ENCODE measurements at regions of chr13 and their contacts with region 1.

Region 1: DNA sequence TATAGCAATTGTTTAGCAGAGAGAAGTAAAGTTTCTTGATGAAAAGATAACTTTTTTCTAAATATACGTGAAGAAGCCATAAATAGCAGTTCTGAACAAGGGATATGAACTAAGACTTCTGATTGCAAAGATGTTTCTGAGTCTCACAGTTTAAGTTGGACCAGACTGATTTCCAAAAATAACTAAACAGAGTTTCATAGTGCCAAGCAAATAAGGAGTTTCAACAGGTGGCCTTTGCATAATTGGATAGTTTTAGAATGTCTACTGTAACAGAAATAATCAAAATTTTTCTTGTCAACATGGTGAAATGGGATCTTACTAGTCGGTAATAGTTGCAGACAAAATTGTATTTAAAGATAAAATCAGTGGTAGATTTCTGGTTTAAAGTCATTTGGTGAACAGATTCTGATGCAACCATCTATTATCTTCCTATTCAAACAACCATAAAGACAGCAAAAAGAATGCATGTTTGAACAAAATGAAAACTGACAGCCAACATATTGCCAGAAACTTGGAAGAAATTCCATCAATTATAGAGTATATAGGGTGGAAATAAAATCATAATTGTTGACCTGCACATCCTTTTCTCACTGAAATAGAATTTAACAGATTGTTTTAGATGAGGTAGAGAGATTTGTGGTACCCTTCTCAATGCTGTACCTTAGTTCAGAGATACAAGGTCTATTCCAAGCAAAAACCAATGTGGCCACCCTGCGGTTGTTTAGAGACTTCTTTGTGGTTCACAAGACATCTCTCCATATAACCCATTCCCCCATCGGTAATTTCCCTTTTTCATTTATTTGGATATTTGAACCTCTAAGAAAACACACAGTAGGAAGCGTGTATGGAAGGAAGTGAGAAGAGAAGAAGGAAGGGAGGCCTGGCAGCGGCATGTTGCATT is 275.3 kb downstream of the COG6 start:
- DNase-seq: no peak
- H3K4me3 Mint-ChIP-seq: no peak overlapping the region
- H3K27ac Mint-ChIP-seq: peak overlapping the region; percentile 48
- H3K4me1 Mint-ChIP-seq: peaks cover 24% of the 10 kb centered on the region
- H3K27me3 Mint-ChIP-seq: no peaks in the 10 kb centered on the region

Region 2: GRCh38 chr13:39952249-39953233 is 21.7 kb after region 1 on chr13:
- intact Hi-C with region 1: loop called (anchors 2 kb)
- DNase-seq: no peak
- H3K4me3 Mint-ChIP-seq: no peak overlapping the region
- H3K27ac Mint-ChIP-seq: peak overlapping the region; percentile 6
- H3K4me1 Mint-ChIP-seq: peaks cover 42% of the 10 kb centered on the region
- H3K27me3 Mint-ChIP-seq: peaks cover 6% of the 10 kb centered on the region

Measured in activated T-helper 2 cell treated with anti-CD3 and anti-CD28 coated beads, Interferon-gamma antibody, Interleukin-2, Interleukin-4, amounts not matched to agents 10 μg/mL and 5 μg/mL and 100 μg/mL, durations not matched to agents 14 hours and 24 hours and 36 hours (primary cell).